ENCODE measurements at regions of chr12 and their contacts with region 1.

Region 1: DNA sequence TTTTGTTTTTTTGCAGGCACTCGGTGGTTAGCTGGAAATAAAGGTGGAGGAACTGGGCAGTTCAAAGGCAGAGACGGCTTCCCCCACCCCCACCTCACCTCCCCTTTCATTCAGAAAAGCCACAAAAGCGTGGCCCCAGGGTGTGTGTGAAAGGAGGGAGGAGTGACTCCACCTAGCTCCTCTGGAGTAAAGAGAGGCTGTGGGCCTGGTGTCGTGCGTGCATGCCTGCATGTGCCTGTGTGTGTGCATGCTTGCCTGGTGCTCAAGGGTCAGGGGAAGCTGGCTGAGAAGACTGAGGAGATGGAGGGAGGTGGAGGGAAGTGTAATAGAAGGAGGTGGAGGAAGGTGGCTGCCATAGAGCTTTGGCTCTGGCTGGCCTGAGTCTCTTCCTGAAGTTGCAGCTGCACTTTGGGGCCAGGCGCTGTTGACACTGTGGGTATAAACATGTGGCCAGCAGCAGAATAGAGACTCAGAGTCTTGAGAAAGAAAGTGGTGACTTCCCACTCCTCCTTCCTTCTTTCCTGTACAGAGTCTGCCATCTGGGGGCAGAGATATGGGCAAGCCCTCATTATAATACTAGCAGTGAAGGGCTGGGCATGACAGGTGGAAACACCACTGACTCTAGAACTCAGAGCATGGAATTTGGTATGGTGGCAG is 36.9 kb upstream of the SINHCAF start:
- DNase-seq: peak; percentile 37
- H3K4me3 ChIP-seq: peak overlapping the region in 1 of 3 experiments; percentile 15
- H3K27ac ChIP-seq: no peak overlapping the region
- H3K4me1 ChIP-seq: peaks cover 26% of the 10 kb centered on the region
- H3K27me3 ChIP-seq: no peaks in the 10 kb centered on the region
- CTCF ChIP-seq: peak in 1 of 2 donors; percentile 32

Region 2: DNA sequence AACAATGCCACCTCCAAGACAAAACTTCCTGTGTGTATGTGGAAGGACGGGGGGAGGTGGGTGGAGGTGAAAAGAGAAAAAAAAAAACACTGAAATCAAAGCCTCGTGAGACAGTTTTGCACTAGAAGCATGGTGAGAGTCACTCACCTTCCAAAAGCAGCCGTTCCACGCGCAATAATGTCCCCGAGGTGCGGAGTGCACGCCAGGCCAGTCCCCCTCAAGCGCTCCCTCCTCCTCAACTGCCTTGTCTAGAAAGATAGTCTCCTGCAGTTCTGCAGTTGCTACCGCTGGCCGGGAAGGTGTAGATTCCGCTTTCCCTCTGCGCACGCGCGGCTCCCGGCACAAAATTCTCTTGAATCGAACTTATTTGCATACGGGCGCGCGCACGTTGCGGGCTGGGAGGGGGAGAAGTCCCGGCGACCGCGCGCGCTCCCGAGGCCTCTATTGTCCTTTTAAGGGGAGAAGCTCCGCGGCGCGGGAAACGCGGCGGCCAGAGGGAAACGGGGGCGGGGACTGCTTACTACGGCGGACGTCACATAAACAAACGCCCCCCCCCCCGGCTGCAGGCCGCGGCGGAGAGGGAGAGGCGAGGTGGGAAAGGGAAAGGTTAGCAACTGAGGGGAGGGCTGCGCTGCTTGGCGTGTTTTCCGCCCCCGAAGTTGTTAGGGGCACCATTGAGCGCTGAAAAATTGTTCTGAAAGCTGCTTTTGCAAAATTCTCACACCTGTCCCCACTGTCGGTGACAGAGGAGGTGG is 36.8 kb before region 1 on chr12 and contains the start of gene SINHCAF:
- CTCF ChIA-PET with region 1: no interaction called
- dilution Hi-C with region 1: no loop called
- in situ Hi-C with region 1: no loop called
- intact Hi-C with region 1: loop called (anchors 2 kb)
- DNase-seq: peak; percentile 98
- H3K4me3 ChIP-seq: peak within 1 kb of the TSS; percentile 87
- H3K27ac ChIP-seq: peak within 1 kb of the TSS; percentile 88
- H3K4me1 ChIP-seq: peaks cover 12% of the 10 kb centered on the region
- H3K27me3 ChIP-seq: no peaks in the 10 kb centered on the region
- CTCF ChIP-seq: no peak
- total RNA-seq, gene SINHCAF: 63.5 to 78.2 TPM

Region 3: DNA sequence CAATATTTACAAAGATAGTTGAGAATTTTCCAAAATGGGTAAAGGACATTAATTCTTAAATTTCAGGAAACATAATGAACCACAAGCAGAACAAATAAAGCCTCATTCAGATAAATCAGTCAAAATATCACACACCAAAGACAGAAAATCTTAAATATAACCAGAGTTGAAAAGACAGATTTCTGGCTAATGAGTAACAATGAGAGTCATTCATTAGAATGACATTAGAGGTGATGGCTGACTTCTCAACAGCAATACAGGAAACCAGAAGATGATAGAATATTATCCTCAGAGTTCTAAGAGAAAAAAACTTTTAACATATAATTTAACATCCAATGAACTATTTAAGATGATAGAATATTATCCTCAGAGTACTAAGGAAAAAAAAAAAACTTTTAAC is 103.9 kb after region 1 on chr12:
- CTCF ChIA-PET with region 1: no interaction called
- dilution Hi-C with region 1: no loop called
- in situ Hi-C with region 1: no loop called
- intact Hi-C with region 1: no loop called
- DNase-seq: no peak
- H3K4me3 ChIP-seq: no peak overlapping the region
- H3K27ac ChIP-seq: no peak overlapping the region
- H3K4me1 ChIP-seq: no peaks in the 10 kb centered on the region
- H3K27me3 ChIP-seq: no peaks in the 10 kb centered on the region
- CTCF ChIP-seq: no peak

Measured in mammary epithelial cell (primary cell).